Spleen (tissue), 13 donors: ENCODE measurements at regions of chr7 and their contacts with region 1.

Region 1: DNA sequence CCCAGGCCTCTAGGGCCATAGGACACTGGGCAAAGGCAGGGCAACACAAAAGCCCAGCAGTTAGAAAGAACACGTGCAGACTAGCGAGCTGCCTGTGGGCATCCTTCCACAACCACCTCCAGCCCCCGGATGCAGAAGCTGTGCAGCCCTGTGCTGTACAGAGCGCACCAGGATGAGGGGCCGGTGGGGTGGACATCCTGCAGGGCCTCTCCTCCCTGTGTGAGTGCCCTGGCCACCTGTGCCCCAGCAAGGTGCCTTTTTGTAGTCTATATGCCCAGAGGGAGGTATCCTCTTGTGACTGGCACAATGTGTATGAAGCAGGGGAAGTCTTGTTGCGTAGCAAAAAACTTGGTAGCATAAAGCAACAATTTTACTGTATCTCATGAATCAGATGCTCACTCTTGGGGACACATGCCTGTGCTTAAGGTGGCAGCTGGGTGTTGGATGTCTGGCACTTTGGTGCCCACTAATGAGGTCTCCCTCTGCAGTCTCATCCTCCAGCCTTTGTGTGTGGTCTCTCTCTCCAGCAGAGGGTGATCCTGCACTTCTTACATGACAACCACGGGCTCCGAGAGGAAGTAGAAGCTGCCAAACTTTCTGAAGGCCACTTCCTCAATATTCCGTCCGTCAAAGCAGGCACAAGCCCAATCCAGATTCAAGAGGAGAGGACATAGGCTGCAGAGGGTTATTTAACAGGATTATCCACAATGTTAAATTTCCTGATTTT is 8.7 kb downstream of the NCAPG2 start:
- DNase-seq: peak; percentile 77
- H3K4me3 ChIP-seq: no peak overlapping the region
- H3K27ac ChIP-seq: peak overlapping the region; percentile 9 to 68 (median 50)
- H3K4me1 ChIP-seq: peaks cover 0 to 16% (median 12%) of the 10 kb centered on the region in 6 donors
- H3K27me3 ChIP-seq: no peaks in the 10 kb centered on the region
- CTCF ChIP-seq: peak; percentile 48 to 88 (median 68)
- POLR2A ChIP-seq: no peak

Region 2: DNA sequence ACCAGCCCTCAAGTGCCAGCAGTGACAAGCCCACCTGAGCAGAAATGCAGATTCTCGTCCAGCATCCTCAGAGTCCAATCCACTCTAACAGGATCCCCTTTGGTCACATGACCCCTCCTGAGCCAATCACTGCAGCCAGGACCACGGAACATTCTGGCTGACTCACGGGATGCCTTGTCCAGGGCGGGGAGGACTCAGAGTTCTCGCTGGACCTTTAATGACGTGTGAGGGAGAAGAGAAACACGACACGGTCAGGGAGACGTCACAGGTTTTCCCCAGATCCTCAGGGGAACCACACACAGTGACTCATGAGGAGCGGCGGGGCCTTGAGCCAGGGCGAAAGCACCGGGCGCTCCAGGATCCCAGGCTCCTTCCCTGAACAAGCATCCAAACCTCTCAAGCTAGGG is 263.9 kb before region 1 on chr7:
- intact Hi-C with region 1: no loop called
- DNase-seq: no peak
- H3K4me3 ChIP-seq: no peak overlapping the region
- H3K27ac ChIP-seq: no peak overlapping the region
- H3K4me1 ChIP-seq: no peaks in the 10 kb centered on the region
- H3K27me3 ChIP-seq: peaks cover 0 to 26% (median 0%) of the 10 kb centered on the region in 7 donors
- CTCF ChIP-seq: no peak
- POLR2A ChIP-seq: no peak

Region 3: DNA sequence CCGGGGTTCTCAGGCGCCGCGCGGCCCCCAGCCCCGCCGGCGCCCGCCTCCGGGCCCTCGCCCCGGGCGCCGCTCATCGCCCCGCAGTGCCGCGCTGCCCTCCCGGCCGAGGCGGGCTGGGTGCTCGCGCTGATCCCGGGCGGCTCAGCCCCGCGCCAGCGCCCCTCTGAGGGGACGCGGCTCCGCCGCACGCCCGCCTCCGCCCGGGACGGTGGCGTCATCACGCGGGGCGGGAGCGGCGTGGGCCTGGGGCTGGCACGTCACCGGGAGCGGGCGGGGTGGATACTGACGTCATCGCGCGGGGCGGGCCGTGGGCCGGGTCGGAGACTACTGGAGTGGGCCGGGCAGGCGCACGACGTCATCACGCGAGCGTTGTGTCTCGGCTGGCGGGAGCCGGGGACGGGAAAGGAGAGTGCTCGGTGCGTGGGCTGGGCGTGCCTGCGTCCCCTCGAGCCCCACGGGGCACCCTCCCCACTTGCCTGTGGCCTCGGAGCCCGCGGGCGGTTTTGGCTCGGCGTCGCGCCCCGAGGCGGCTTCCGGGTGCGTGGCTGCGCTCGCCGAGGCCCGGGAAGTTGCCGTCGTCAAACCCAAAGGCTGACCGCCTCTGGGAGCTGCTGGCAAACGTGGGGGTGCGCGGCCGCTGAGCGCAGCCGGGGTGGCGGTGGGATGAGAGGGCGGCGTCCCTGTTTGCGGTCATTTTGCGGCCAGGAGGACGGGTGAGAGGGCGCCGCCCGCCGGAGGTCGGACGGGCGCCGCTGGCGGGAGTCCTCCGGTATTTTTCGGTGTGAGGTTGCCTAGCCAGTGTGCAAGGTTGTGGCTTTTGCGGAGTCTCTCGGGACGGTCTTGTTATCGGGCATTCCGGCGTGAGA is 133.7 kb after region 1 on chr7 and contains the start of gene ESYT2:
- intact Hi-C with region 1: loop called (anchors 2 kb)
- DNase-seq: peak; percentile 100
- H3K4me3 ChIP-seq: peak within 1 kb of the TSS; percentile 71 to 95 (median 80)
- H3K27ac ChIP-seq: peak within 1 kb of the TSS; percentile 96 to 100 (median 99)
- H3K4me1 ChIP-seq: peaks cover 6 to 47% (median 39%) of the 10 kb centered on the region in 6 donors
- H3K27me3 ChIP-seq: no peaks in the 10 kb centered on the region
- CTCF ChIP-seq: peak in 6 of 11 experiments; percentile 10 to 37 (median 16)
- POLR2A ChIP-seq: peak in 2 of 3 donors; percentile 85 to 94
- total RNA-seq, gene ESYT2: 37.1 to 61.0 (median 47.2) TPM

Region 4: DNA sequence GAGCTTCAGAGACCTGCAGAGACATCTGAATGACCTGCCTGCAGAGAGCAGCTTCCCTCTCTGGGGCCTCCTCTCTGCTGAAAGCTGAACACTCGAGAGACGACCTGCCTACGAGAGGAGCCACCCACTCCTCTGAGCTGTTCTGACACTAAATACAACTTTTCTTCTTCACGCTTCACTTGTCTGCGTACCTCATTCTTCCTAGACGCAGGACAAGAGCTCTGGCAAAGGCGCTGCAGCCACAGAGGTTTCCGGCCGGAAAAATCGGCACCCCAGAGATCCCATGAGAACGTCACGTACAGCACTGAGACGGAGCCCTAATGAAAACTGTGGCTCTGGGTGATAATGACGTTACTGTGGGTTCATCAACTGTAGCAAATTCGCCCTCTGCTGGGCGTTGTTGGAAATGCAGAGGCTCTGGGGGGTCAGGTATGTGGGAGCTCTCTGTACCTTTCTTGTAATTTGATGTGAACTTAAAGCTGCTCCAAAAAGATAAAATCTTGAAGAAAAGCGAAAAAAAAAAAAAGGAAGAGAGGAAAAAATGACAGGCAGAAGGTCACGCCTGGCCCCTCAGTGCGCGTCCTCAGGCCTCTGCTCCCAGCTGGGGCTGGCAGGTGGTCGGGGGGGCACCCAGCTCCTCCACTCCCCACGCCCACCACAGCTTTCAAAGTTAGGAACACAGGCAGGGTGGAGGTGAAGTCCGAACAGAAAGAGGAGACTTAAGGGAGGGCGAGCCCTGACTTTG is 281.1 kb after region 1 on chr7:
- intact Hi-C with region 1: loop called (anchors 5 kb)
- DNase-seq: peak; percentile 92
- H3K4me3 ChIP-seq: peak overlapping the region in 7 of 8 donors; percentile 4 to 64 (median 29)
- H3K27ac ChIP-seq: peak overlapping the region; percentile 35 to 79 (median 65)
- H3K4me1 ChIP-seq: peaks cover 12 to 34% (median 19%) of the 10 kb centered on the region in 6 donors
- H3K27me3 ChIP-seq: peaks cover 0 to 5% (median 0%) of the 10 kb centered on the region in 7 donors
- CTCF ChIP-seq: peak; percentile 89 to 98 (median 95)
- POLR2A ChIP-seq: no peak